ENCODE measurements at regions of chr4 and their contacts with region 1.

Region 1: GRCh38 chr4:96352051-96352517 is 512.2 kb downstream of the PDHA2 start:
- DNase-seq: peak; percentile 33
- ATAC-seq: peak; percentile 29; the same call in 1 of the 2 replicates
- H3K4me3 ChIP-seq: no peak overlapping the region
- H3K27ac ChIP-seq: no peak overlapping the region
- H3K4me1 ChIP-seq: no peaks in the 10 kb centered on the region
- H3K27me3 ChIP-seq: no peaks in the 10 kb centered on the region
- CTCF ChIP-seq: peak; percentile 59; the same call in 1 of the 2 replicates

Region 2: DNA sequence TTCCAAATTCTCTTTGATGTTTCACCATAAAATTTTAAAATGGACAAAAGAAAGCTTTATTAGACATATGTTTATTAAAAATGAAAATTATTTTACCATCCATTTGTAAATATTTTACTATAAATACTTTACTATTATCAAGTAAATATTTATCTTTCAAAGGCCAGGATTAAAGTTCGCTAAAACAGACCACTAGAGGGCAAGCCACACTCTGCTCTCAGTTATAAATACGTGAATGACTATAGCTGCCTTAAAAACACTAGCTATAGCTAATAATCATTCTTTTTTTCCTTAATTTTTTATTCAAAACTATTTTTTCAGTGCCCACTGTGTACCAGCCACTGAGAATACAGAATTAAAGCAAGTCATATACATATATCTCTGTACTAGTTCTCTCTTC is 841.9 kb before region 1 on chr4:
- CTCF ChIA-PET with region 1: no interaction called
- POLR2A ChIA-PET with region 1: no interaction called
- intact Hi-C with region 1: loop called (anchors 5 kb)
- DNase-seq: peak; percentile 36
- ATAC-seq: peak; percentile 57; the same call in 1 of the 2 replicates
- H3K4me3 ChIP-seq: no peak overlapping the region
- H3K27ac ChIP-seq: no peak overlapping the region
- H3K4me1 ChIP-seq: peaks cover 10% of the 10 kb centered on the region
- H3K27me3 ChIP-seq: no peaks in the 10 kb centered on the region
- CTCF ChIP-seq: peak; percentile 54

Region 3: DNA sequence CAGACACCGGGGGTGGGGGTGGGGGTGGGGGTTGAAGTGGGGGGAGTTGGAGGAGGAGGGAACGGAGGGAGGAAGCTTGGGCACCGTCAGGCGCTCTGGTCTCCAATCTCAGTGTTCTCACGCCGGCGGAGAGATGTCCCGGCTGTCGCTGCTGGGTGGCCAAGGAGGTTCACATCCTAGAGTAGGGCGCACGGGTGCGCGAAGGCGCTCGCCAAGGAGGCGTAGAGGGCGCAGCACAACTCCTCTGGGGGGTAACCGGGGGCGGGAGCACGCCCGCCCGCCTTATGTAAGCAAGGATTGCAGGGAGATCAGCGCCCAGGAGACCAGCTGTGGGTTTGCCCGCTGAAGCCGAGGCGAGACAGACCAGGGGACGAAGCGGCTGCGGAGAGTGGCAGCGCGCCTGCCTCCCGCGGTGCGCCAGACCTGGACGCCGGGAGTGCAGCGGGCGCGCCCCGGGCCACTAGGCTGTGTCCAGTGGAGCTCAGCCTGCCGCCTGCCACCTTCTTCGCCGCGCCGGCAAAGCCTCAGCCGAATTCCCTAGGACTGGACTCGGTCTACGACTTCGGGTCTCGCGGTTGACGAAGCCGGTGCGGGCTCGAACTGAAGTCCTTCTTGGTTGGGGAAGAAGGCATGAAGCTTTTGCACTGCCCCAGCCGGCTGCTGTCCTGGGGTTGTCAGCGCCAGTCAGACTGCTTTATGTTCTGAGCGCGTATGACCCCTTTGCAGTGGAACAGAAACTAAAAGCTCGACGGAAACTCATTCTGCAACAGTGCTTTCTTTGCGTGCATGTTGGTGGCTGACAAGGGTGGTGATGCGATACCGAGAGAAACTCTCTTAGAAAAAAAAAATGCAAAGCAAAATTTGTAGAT is 802.6 kb before region 1 on chr4:
- CTCF ChIA-PET with region 1: no interaction called
- POLR2A ChIA-PET with region 1: no interaction called
- intact Hi-C with region 1: loop called (anchors 10 kb)
- DNase-seq: no peak
- ATAC-seq: peak; percentile 52
- H3K4me3 ChIP-seq: peak overlapping the region; percentile 73
- H3K27ac ChIP-seq: no peak overlapping the region
- H3K4me1 ChIP-seq: peaks cover 4% of the 10 kb centered on the region
- H3K27me3 ChIP-seq: peaks cover 47% of the 10 kb centered on the region
- CTCF ChIP-seq: no peak

Region 4: DNA sequence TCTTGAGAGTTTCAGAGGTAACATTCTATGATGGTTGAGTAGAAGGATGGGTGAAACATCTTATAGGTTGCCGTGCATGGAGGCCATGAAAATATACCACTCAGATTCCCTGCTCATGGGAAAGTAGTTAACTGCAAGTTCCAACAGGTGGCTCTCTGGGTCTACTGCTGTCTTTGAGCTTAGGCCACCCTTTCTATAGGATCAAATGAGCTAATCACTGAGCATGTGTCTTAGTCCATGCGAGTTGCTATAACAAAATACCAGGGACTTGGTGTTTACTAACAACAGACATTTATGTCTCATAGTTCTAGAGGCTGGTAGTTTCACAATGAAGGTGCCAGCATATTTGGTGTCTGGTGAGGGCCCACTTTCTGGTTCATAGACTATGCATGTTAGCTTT is 658.5 kb before region 1 on chr4:
- CTCF ChIA-PET with region 1: no interaction called
- POLR2A ChIA-PET with region 1: no interaction called
- intact Hi-C with region 1: loop called (anchors 1 kb)
- DNase-seq: peak; percentile 58
- ATAC-seq: peak; percentile 64; the same call in 1 of the 2 replicates
- H3K4me3 ChIP-seq: no peak overlapping the region
- H3K27ac ChIP-seq: no peak overlapping the region
- H3K4me1 ChIP-seq: no peaks in the 10 kb centered on the region
- H3K27me3 ChIP-seq: no peaks in the 10 kb centered on the region
- CTCF ChIP-seq: peak; percentile 63

Region 5: GRCh38 chr4:95821867-95822266 is 530.2 kb before region 1 on chr4:
- CTCF ChIA-PET with region 1: no interaction called
- POLR2A ChIA-PET with region 1: no interaction called
- intact Hi-C with region 1: loop called (anchors 10 kb)
- DNase-seq: no peak
- ATAC-seq: no peak
- H3K4me3 ChIP-seq: no peak overlapping the region
- H3K27ac ChIP-seq: no peak overlapping the region
- H3K4me1 ChIP-seq: no peaks in the 10 kb centered on the region
- H3K27me3 ChIP-seq: no peaks in the 10 kb centered on the region
- CTCF ChIP-seq: no peak